ENCODE measurements at regions of chr13 and their contacts with region 1.

Region 1: GRCh38 chr13:99436686-99437416 is 64.4 kb upstream of the TM9SF2 start:
- DNase-seq: peak; percentile 91 to 96 (median 93)
- H3K4me3 ChIP-seq: peak overlapping the region; percentile 40
- H3K4me3 Mint-ChIP-seq: peak overlapping the region; percentile 29 to 76 (median 66)
- H3K27ac ChIP-seq: no peak overlapping the region
- H3K27ac Mint-ChIP-seq: peak overlapping the region; percentile 48 to 96 (median 86)
- H3K4me1 ChIP-seq: peaks cover 53% of the 10 kb centered on the region
- H3K4me1 Mint-ChIP-seq: peaks cover 55 to 62% (median 59%) of the 10 kb centered on the region in 3 donors
- H3K27me3 ChIP-seq: no peaks in the 10 kb centered on the region
- H3K27me3 Mint-ChIP-seq: no peaks in the 10 kb centered on the region

Region 2: GRCh38 chr13:99258210-99258860 is 178.5 kb before region 1 on chr13 and contains the start of gene GPR18:
- CTCF ChIA-PET with region 1: interaction called, 260 read pairs
- POLR2A ChIA-PET with region 1: no interaction called
- DNase-seq: peak in 4 of 5 donors; percentile 16 to 73 (median 58)
- H3K4me3 ChIP-seq: peak within 1 kb of the TSS; percentile 74
- H3K4me3 Mint-ChIP-seq: peak within 1 kb of the TSS; percentile 91 to 98 (median 96)
- H3K27ac ChIP-seq: peak within 1 kb of the TSS; percentile 39
- H3K27ac Mint-ChIP-seq: peak within 1 kb of the TSS; percentile 89 to 99 (median 96)
- H3K4me1 ChIP-seq: peaks cover 63% of the 10 kb centered on the region
- H3K4me1 Mint-ChIP-seq: peaks cover 65 to 83% (median 78%) of the 10 kb centered on the region in 3 donors
- H3K27me3 ChIP-seq: no peaks in the 10 kb centered on the region
- H3K27me3 Mint-ChIP-seq: no peaks in the 10 kb centered on the region
- total RNA-seq, gene GPR18: 15.2 to 16.2 TPM

Region 3: DNA sequence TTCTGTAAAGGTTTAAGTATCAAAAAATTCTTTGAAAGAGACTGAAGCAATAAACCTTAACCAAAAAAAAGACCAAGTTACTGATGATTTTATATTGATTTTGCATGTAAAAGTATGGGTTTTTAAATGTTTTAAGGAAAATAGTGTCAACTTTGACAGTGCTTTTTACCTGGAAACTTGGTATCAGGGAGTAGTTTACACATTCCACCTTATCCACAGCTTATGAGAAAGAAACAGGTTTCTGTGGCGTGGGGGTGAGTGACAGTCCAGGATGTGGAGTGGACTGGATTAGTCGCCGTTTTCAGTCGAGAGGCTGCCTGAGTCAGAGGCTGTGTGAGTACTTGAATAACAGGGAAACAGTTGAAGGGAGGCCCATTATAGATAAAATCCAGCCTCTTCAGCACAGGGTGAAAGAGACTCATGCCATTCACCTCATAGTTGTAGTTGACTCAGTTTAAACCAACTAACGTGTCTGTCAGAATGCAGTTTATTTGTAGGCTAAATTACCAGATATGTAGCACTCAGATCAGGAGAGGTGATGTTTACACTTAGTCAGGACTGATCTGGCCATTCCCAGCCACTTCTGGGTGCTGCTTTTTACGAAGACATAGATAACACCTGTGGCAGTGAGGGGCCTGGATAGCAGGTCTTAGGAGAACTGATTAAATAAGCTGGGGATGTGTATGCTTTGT is 129.1 kb before region 1 on chr13:
- CTCF ChIA-PET with region 1: interaction called, 13 read pairs
- POLR2A ChIA-PET with region 1: interaction called, 4 read pairs
- DNase-seq: peak in 2 of 5 donors; percentile 33 to 76
- H3K4me3 ChIP-seq: peak overlapping the region; percentile 50
- H3K4me3 Mint-ChIP-seq: peak overlapping the region; percentile 88 to 95 (median 94)
- H3K27ac ChIP-seq: peak overlapping the region; percentile 71
- H3K27ac Mint-ChIP-seq: peak overlapping the region; percentile 89 to 98 (median 94)
- H3K4me1 ChIP-seq: peaks cover 77% of the 10 kb centered on the region
- H3K4me1 Mint-ChIP-seq: peaks cover 75 to 85% (median 84%) of the 10 kb centered on the region in 3 donors
- H3K27me3 ChIP-seq: no peaks in the 10 kb centered on the region
- H3K27me3 Mint-ChIP-seq: no peaks in the 10 kb centered on the region

Region 4: GRCh38 chr13:99356158-99357091 is 80.4 kb before region 1 on chr13:
- CTCF ChIA-PET with region 1: interaction called, 43 read pairs
- POLR2A ChIA-PET with region 1: interaction called, 3 read pairs
- DNase-seq: peak in 4 of 5 donors; percentile 55 to 92 (median 88)
- H3K4me3 ChIP-seq: peak overlapping the region; percentile 43
- H3K4me3 Mint-ChIP-seq: peak overlapping the region; percentile 2 to 79 (median 72)
- H3K27ac ChIP-seq: peak overlapping the region; percentile 96
- H3K27ac Mint-ChIP-seq: peak overlapping the region; percentile 96 to 100 (median 99)
- H3K4me1 ChIP-seq: peaks cover 97% of the 10 kb centered on the region
- H3K4me1 Mint-ChIP-seq: peaks cover 97 to 100% (median 100%) of the 10 kb centered on the region in 3 donors
- H3K27me3 ChIP-seq: no peaks in the 10 kb centered on the region
- H3K27me3 Mint-ChIP-seq: no peaks in the 10 kb centered on the region

Region 5: DNA sequence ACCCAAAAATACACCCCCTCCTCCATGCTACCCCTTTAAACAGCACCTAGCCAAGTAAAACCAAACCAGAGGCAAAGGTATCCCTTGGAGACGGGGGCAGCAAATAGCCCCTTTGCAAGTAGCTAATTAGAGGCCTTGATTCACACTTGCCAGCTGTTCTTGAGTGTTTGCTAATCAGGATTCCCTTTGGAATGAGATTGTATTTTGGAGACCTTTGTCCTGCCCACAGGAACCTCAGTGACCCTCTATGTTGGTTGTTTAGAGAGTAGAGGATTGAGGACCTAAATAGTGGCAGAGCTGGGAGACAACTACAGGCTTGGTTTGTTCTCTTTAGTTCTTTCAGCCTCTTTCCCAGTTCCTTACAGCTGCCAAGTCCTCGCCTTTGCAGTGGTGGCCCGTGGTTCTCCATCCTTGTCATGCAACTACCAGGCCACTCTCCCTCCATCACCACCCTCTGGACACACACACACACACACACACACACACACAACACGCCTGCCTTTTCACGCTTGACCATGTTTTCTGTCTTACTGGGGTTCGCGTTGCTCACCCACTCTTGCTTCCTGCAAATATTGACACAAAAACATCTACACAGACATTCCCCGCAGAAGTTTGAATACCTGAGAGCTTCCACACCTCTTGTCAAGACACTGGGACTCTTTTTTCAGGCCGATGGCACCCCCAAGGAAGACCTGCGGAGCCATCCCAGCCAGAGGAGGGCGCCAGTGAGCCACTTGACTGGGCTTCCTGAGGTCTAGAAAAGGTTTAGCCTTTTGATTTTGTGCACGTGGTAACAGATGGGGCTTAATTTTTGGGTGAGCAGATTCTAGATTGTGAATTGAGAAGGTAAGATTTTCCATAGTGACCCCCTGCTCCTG is 49.7 kb before region 1 on chr13:
- CTCF ChIA-PET with region 1: interaction called, 81 read pairs
- POLR2A ChIA-PET with region 1: interaction called, 6 read pairs
- DNase-seq: peak; percentile 69 to 87 (median 75)
- H3K4me3 ChIP-seq: no peak overlapping the region
- H3K4me3 Mint-ChIP-seq: peak overlapping the region in 5 of 7 donors; percentile 24 to 46 (median 33)
- H3K27ac ChIP-seq: no peak overlapping the region
- H3K27ac Mint-ChIP-seq: peak overlapping the region; percentile 81 to 95 (median 91)
- H3K4me1 ChIP-seq: peaks cover 66% of the 10 kb centered on the region
- H3K4me1 Mint-ChIP-seq: peaks cover 54 to 71% (median 56%) of the 10 kb centered on the region in 3 donors
- H3K27me3 ChIP-seq: no peaks in the 10 kb centered on the region
- H3K27me3 Mint-ChIP-seq: peaks cover 0 to 2% of the 10 kb centered on the region in 2 donors

Measured in CD8-positive, alpha-beta memory T cell (primary cell).